ENCODE measurements at regions of chrX and their contacts with region 1.

Region 1: DNA sequence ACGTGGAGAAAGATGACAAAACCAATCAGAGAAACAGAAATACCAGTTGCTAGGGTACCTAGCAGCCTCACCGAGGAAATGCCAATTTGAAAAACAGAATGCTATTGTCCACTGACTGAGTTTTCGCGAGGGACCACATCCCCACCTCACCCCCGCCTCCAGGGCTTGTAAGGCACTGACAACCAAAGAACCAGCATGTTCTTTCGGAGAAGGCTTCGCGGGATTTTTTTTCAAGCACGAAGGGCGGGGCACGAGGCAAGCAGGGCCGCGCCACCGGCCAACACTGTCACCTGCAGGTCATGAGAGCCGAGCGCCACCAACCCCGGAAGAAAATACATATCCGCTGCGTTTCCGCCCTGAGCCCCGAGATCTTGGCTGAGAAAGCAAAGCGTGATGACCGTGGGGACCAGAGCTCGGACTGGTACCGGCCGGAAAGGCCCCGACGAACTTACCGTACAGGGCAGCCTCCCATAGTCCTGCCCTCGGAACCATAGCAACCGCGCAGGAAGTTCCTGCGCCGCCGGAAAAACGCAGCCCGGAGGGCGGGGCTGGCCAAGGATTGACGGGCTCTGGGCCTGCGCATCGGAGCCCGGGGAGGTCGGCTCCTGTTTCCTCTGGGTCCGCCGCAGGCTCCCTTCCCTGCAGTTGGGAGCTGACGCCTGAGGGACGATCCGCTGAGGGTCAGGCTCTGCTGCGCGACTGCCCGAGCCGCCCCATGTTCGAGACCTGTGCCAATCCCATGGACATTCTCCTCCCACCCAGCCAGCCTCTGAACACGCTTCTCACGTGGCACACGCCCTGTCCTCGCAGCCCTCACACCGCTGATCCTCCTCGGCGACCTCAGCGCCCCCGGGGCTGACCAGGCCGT is 59.2 kb upstream of the PAGE5 start:
- DNase-seq: peak; percentile 84 to 93 (median 90)
- ATAC-seq: peak; percentile 91
- H3K4me3 ChIP-seq: peak overlapping the region; percentile 77
- H3K4me3 Mint-ChIP-seq: peak overlapping the region; percentile 90
- H3K27ac ChIP-seq: peak overlapping the region; percentile 79 to 94
- H3K27ac Mint-ChIP-seq: peak overlapping the region; percentile 88
- H3K4me1 ChIP-seq: peaks cover 8% of the 10 kb centered on the region
- H3K4me1 Mint-ChIP-seq: peaks cover 17% of the 10 kb centered on the region
- H3K27me3 ChIP-seq: no peaks in the 10 kb centered on the region
- H3K27me3 Mint-ChIP-seq: no peaks in the 10 kb centered on the region
- CTCF ChIP-seq: peak; percentile 64

Region 2: GRCh38 chrX:53224860-53225797 is 1935.8 kb before region 1 on chrX and contains the start of gene KDM5C:
- CTCF ChIA-PET with region 1: no interaction called
- POLR2A ChIA-PET with region 1: no interaction called
- intact Hi-C with region 1: loop called in 1 of 2 experiments (anchors 5 kb)
- DNase-seq: peak; percentile 68 to 94 (median 88)
- ATAC-seq: peak; percentile 74
- H3K4me3 ChIP-seq: peak within 1 kb of the TSS; percentile 98
- H3K4me3 Mint-ChIP-seq: peak within 1 kb of the TSS; percentile 100
- H3K27ac ChIP-seq: peak within 1 kb of the TSS; percentile 89 to 91
- H3K27ac Mint-ChIP-seq: peak within 1 kb of the TSS; percentile 95
- H3K4me1 ChIP-seq: peaks cover 32% of the 10 kb centered on the region
- H3K4me1 Mint-ChIP-seq: peaks cover 38% of the 10 kb centered on the region
- H3K27me3 ChIP-seq: no peaks in the 10 kb centered on the region
- H3K27me3 Mint-ChIP-seq: no peaks in the 10 kb centered on the region
- CTCF ChIP-seq: no peak
- total RNA-seq, gene KDM5C: 236 to 237 TPM

Region 3: GRCh38 chrX:54439967-54440871 is 720.7 kb before region 1 on chrX and contains the start of gene TSR2:
- CTCF ChIA-PET with region 1: no interaction called
- POLR2A ChIA-PET with region 1: no interaction called
- intact Hi-C with region 1: loop called in 1 of 2 experiments (anchors 10 kb)
- DNase-seq: peak; percentile 58 to 90 (median 68)
- ATAC-seq: peak; percentile 96
- H3K4me3 ChIP-seq: peak within 1 kb of the TSS; percentile 87
- H3K4me3 Mint-ChIP-seq: peak within 1 kb of the TSS; percentile 95
- H3K27ac ChIP-seq: peak within 1 kb of the TSS; percentile 47 to 56
- H3K27ac Mint-ChIP-seq: peak within 1 kb of the TSS; percentile 85
- H3K4me1 ChIP-seq: peaks cover 25% of the 10 kb centered on the region
- H3K4me1 Mint-ChIP-seq: peaks cover 32% of the 10 kb centered on the region
- H3K27me3 ChIP-seq: no peaks in the 10 kb centered on the region
- H3K27me3 Mint-ChIP-seq: no peaks in the 10 kb centered on the region
- CTCF ChIP-seq: no peak
- total RNA-seq, gene TSR2: 36.3 to 36.5 TPM

Region 4: DNA sequence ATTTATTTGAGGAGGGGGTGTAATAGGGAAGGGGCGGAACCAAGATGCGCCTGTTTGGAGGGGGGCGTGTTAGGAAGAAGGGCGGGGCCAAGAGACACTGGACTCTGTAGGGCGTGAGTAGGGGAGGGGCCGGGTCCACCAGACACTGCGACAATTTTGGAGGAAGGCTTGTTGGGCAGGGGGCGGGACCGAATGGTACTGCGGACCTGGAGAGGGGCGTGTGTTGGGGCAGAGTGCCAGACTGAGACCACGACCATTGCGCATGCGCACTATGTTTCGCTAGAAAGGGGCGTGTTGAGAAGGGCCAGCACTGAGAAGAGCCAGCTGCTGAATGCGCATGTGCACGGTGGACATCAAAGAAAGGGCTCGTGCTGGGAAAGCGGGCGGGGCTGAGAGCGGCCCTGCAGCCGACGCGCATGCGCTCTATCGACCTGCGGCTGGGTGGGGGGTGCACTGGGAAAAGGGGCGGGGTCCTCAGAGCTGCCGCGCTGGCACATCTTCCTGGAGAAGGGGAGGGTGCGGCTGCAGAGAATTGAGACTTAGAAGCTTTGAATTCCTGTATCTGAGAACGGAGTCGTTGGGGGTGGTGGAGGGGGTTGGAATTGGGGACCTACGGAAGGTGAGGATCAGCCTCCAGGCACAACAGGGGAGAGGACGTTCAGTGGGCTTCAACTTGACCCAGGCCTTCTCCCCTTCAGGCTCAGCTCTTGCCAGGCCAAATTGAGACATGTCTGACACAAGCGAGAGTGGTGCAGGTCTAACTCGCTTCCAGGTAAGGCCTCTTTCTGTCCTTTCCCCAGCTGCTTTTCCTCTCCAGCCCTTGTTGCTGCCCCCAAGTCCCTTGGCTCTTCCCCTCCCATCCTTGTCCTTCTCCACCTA is 352.1 kb before region 1 on chrX:
- CTCF ChIA-PET with region 1: interaction called, 3 read pairs
- POLR2A ChIA-PET with region 1: interaction called, 3 read pairs
- intact Hi-C with region 1: loop called in 1 of 2 experiments (anchors 5 kb)
- DNase-seq: peak; percentile 75 to 97 (median 84)
- ATAC-seq: peak; percentile 70
- H3K4me3 ChIP-seq: peak overlapping the region; percentile 93
- H3K4me3 Mint-ChIP-seq: peak overlapping the region; percentile 95
- H3K27ac ChIP-seq: peak overlapping the region; percentile 65 to 88
- H3K27ac Mint-ChIP-seq: peak overlapping the region; percentile 98
- H3K4me1 ChIP-seq: peaks cover 25% of the 10 kb centered on the region
- H3K4me1 Mint-ChIP-seq: peaks cover 24% of the 10 kb centered on the region
- H3K27me3 ChIP-seq: no peaks in the 10 kb centered on the region
- H3K27me3 Mint-ChIP-seq: no peaks in the 10 kb centered on the region
- CTCF ChIP-seq: no peak

Region 5: DNA sequence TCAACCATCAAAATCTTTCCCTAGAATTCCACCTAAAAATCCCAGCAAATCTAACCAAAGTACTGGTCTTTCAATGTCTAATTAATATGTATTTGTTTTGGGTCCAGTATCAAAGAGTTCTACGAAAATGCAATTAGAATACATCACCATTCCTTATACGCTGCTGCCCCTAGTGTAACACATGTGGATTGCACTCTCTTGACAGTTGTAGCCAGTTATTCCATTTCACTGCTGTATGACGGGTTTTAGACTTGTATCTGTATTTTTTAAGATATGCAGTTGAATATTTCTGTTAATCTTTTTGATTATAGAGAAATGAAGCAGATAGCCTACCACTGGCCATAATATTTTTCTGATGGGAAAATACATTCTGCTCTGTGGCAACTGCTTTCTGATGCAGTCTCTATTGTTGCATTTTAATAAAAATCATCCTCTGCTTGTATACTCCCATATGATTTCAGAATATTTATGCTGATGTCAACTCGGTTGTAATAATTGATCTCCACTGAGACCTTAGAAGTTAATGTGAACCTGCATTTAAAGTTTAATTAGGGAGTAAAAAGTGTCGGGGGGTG is 103.2 kb before region 1 on chrX:
- CTCF ChIA-PET with region 1: no interaction called
- POLR2A ChIA-PET with region 1: interaction called, 4 read pairs
- intact Hi-C with region 1: loop called in 1 of 2 experiments (anchors 5 kb)
- DNase-seq: peak in 9 of 14 experiments; percentile 9 to 69 (median 25)
- ATAC-seq: peak; percentile 59
- H3K4me3 ChIP-seq: peak overlapping the region; percentile 30
- H3K4me3 Mint-ChIP-seq: peak overlapping the region; percentile 84
- H3K27ac ChIP-seq: no peak overlapping the region
- H3K27ac Mint-ChIP-seq: peak overlapping the region; percentile 88
- H3K4me1 ChIP-seq: peaks cover 11% of the 10 kb centered on the region
- H3K4me1 Mint-ChIP-seq: peaks cover 24% of the 10 kb centered on the region
- H3K27me3 ChIP-seq: no peaks in the 10 kb centered on the region
- H3K27me3 Mint-ChIP-seq: no peaks in the 10 kb centered on the region
- CTCF ChIP-seq: peak; percentile 82

Region 6: DNA sequence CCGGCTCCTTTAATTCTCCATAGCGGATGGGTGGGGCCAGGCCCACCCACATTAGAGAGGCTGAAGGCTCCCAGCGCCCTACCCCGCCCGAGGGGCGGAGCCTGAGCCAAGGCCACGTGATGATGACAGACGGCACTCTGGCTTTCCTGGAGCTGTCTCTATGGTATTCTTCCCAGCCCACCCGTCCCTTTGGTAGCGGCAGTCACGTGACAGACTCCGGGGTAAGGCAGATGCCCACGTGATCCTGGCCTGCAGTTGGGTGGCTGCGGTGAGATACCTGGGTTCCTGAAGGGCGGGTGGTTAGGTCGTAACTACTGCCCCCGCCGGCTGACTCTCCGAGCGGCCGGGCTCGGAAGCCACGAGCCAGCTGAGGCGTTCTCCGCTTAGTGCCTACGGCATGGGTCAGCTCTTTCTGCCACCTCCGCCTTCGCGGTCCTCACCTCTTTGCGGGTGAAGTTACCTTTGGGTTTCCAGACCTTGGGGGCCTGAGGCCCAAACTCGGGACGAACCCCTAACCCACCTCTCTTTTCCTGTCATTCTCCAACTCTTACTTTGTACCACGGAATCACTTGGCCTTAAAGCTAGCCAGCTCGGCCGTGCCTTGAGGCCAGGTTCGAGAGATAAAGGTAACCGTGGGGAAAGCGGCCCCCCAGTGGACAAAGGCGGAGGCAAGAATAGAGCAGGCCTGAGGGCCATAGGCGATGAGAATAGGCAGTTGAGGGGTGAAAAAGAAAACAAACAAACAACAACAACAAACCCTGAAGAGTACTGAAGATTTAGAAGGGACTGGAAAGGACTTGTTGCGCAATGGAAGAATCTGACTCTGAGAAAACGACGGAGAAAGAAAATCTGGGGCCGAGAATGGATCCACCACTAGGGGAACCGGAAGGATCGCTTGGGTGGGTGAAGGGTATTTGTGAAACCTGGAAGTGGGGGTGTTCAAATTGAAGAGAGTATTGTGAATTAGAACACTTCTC is 556.9 kb after region 1 on chrX and contains the start of gene RRAGB:
- CTCF ChIA-PET with region 1: no interaction called
- POLR2A ChIA-PET with region 1: no interaction called
- intact Hi-C with region 1: loop called in 1 of 2 experiments (anchors 1 kb)
- DNase-seq: peak; percentile 78 to 97 (median 88)
- ATAC-seq: peak; percentile 98
- H3K4me3 ChIP-seq: peak within 1 kb of the TSS; percentile 82
- H3K4me3 Mint-ChIP-seq: peak within 1 kb of the TSS; percentile 76
- H3K27ac ChIP-seq: peak within 1 kb of the TSS; percentile 85 to 89
- H3K27ac Mint-ChIP-seq: peak within 1 kb of the TSS; percentile 95
- H3K4me1 ChIP-seq: peaks cover 18% of the 10 kb centered on the region
- H3K4me1 Mint-ChIP-seq: peaks cover 43% of the 10 kb centered on the region
- H3K27me3 ChIP-seq: no peaks in the 10 kb centered on the region
- H3K27me3 Mint-ChIP-seq: no peaks in the 10 kb centered on the region
- CTCF ChIP-seq: peak; percentile 69
- total RNA-seq, gene RRAGB: 7.0 to 8.5 TPM